Right cardiac atrium (tissue), 5 donors: ENCODE measurements at regions of chr21 and their contacts with region 1.

Region 1: GRCh38 chr21:37267269-37268184 is at the start of gene VPS26C:
- DNase-seq: peak; percentile 99
- ATAC-seq: peak; percentile 97 to 98
- H3K4me3 ChIP-seq: peak within 1 kb of the TSS; percentile 81
- H3K27ac ChIP-seq: peak within 1 kb of the TSS; percentile 95
- H3K4me1 ChIP-seq: peaks cover 2% of the 10 kb centered on the region
- H3K27me3 ChIP-seq: no peaks in the 10 kb centered on the region
- total RNA-seq, gene VPS26C: 36.7 to 40.7 (median 39.5) TPM

Region 2: DNA sequence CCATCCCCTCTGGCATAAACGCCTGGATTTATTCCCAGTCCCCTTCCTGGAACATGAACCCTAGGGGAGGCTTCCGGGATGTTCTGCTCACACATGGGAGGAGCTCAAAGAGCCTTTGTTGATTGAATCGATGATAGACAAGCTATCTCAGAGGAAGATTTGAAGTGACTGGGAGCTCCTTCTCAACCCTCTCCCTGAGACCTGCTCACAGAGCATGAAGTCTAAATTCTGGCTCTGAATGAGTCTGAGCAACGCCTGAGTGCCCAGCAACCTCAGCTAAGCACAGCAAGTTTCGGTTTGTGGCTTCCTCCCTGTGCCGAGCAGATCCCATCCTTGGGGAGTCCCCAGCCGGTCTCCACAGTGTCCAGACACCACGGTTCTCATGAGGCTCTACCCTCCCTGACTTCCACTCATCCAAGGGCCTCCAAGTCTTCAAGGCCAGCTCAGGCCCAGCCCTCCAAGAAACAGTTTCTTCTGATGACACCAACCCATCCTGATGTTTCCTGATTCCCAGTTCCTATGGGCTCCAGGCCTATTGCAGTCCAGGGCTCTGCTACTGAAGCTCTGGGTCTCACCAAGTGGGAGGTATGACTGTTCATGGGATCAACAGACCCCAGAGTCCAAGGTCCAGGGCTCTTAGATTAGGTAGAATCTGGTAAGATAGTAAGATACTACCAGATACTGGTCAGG is 289.9 kb after region 1 on chr21:
- intact Hi-C with region 1: loop called in 1 of 4 experiments (anchors 10 kb)
- DNase-seq: no peak
- ATAC-seq: no peak
- H3K4me3 ChIP-seq: no peak overlapping the region
- H3K27ac ChIP-seq: peak overlapping the region; percentile 56
- H3K4me1 ChIP-seq: peaks cover 3% of the 10 kb centered on the region
- H3K27me3 ChIP-seq: no peaks in the 10 kb centered on the region